ENCODE measurements at regions of chr16 and their contacts with region 1.

Region 1: GRCh38 chr16:75550211-75550662 is 5.8 kb downstream of the TMEM231 start:
- DNase-seq: peak; percentile 69 to 86 (median 85)
- H3K4me3 ChIP-seq: peak overlapping the region in 3 of 7 experiments; percentile 29 to 66 (median 37)
- H3K27ac ChIP-seq: no peak overlapping the region
- H3K4me1 ChIP-seq: peaks cover 4 to 17% (median 11%) of the 10 kb centered on the region in 4 experiments
- H3K27me3 ChIP-seq: no peaks in the 10 kb centered on the region

Region 2: GRCh38 chr16:75471723-75472633 is 78.3 kb before region 1 on chr16:
- CTCF ChIA-PET with region 1: interaction called, 27 read pairs
- POLR2A ChIA-PET with region 1: no interaction called
- DNase-seq: peak; percentile 46 to 63 (median 57)
- H3K4me3 ChIP-seq: no peak overlapping the region
- H3K27ac ChIP-seq: no peak overlapping the region
- H3K4me1 ChIP-seq: no peaks in the 10 kb centered on the region
- H3K27me3 ChIP-seq: peaks cover 0 to 1% (median 0%) of the 10 kb centered on the region in 5 experiments

Region 3: DNA sequence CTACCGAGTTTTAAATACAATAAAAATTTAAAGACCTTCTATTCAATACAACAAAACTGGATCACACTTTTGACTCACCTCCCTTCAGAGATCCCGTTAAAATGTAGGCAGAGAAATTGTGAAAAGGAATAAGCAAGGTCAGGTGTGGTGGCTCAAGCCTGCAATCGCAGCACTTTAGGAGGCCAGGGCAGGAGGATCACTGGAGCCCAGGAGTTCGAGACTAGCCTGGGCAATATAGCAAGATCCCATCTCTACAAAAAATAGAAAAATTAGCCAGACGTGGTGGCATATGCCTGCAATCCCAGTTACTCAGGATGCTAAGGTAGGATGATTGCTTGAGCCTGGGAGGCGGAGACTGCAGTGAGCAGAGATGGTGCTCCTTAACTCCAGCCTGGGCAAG is 31.1 kb before region 1 on chr16:
- CTCF ChIA-PET with region 1: interaction called, 20 read pairs
- POLR2A ChIA-PET with region 1: no interaction called
- DNase-seq: no peak
- H3K4me3 ChIP-seq: no peak overlapping the region
- H3K27ac ChIP-seq: no peak overlapping the region
- H3K4me1 ChIP-seq: peaks cover 0 to 8% (median 6%) of the 10 kb centered on the region in 4 experiments
- H3K27me3 ChIP-seq: no peaks in the 10 kb centered on the region

Region 4: GRCh38 chr16:75527825-75528299 is 22.4 kb before region 1 on chr16:
- CTCF ChIA-PET with region 1: interaction called, 11 read pairs
- POLR2A ChIA-PET with region 1: no interaction called
- DNase-seq: no peak
- H3K4me3 ChIP-seq: no peak overlapping the region
- H3K27ac ChIP-seq: no peak overlapping the region
- H3K4me1 ChIP-seq: no peaks in the 10 kb centered on the region
- H3K27me3 ChIP-seq: no peaks in the 10 kb centered on the region